CD4-positive, alpha-beta memory T cell (primary cell): ENCODE measurements at regions of chrX and their contacts with region 1.

Region 1: GRCh38 chrX:70133303-70134115 is at the start of gene IGBP1:
- DNase-seq: peak; percentile 78 to 94 (median 86)
- H3K4me3 ChIP-seq: peak within 1 kb of the TSS; percentile 89 to 90
- H3K4me3 Mint-ChIP-seq: peak within 1 kb of the TSS; percentile 87 to 99 (median 98)
- H3K27ac ChIP-seq: peak within 1 kb of the TSS; percentile 77
- H3K27ac Mint-ChIP-seq: peak within 1 kb of the TSS; percentile 84 to 99 (median 98)
- H3K4me1 ChIP-seq: peaks cover 35% of the 10 kb centered on the region
- H3K4me1 Mint-ChIP-seq: peaks cover 16 to 38% (median 22%) of the 10 kb centered on the region in 4 donors
- H3K27me3 ChIP-seq: no peaks in the 10 kb centered on the region
- H3K27me3 Mint-ChIP-seq: no peaks in the 10 kb centered on the region
- total RNA-seq, gene IGBP1: 60.8 to 66.2 TPM

Region 2: GRCh38 chrX:68504237-68504636 is 1629.3 kb before region 1 on chrX:
- CTCF ChIA-PET with region 1: no interaction called
- POLR2A ChIA-PET with region 1: no interaction called
- intact Hi-C with region 1: loop called (anchors 10 kb)
- DNase-seq: peak in 3 of 5 donors; percentile 14 to 81 (median 33)
- H3K4me3 ChIP-seq: no peak overlapping the region
- H3K4me3 Mint-ChIP-seq: peak overlapping the region in 1 of 8 donors; percentile 48
- H3K27ac ChIP-seq: peak overlapping the region; percentile 30
- H3K27ac Mint-ChIP-seq: peak overlapping the region; percentile 32 to 88 (median 75)
- H3K4me1 ChIP-seq: peaks cover 56% of the 10 kb centered on the region
- H3K4me1 Mint-ChIP-seq: peaks cover 20 to 85% (median 55%) of the 10 kb centered on the region in 4 donors
- H3K27me3 ChIP-seq: no peaks in the 10 kb centered on the region
- H3K27me3 Mint-ChIP-seq: no peaks in the 10 kb centered on the region

Region 3: DNA sequence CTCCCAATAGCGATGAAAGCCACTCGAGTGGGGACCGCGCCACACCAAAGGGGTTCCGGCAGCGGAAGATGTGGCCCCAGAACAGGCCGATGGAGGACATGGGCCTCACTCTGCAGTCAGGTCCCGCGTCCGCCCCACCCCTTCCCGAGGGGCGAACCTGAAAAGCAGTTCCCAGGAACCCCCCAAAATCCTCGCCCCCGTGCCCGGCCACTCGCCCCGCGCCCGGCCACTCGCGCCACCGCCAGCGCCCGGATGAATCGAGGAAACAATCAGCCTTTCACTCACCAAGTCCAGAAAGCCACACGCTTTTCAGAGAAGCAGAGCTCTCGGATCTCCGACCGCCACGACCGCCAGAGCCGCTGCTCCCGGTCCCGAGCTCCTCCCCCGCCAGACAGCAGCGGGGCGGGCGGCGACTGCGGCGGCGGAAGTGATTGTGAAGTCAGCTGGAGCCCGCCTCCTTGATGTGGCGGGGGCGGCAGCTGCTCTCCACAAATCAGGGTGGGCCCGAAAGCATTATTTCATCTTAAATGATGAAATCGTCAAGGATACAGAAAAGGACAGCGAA is 968.3 kb before region 1 on chrX and contains the start of gene PJA1:
- CTCF ChIA-PET with region 1: no interaction called
- POLR2A ChIA-PET with region 1: interaction called, 3 read pairs
- intact Hi-C with region 1: loop called (anchors 10 kb)
- DNase-seq: peak; percentile 66 to 75 (median 70)
- H3K4me3 ChIP-seq: peak within 1 kb of the TSS; percentile 60 to 76
- H3K4me3 Mint-ChIP-seq: peak within 1 kb of the TSS; percentile 74 to 91 (median 88)
- H3K27ac ChIP-seq: peak within 1 kb of the TSS; percentile 64
- H3K27ac Mint-ChIP-seq: peak within 1 kb of the TSS; percentile 56 to 94 (median 92)
- H3K4me1 ChIP-seq: peaks cover 28% of the 10 kb centered on the region
- H3K4me1 Mint-ChIP-seq: peaks cover 21 to 40% (median 28%) of the 10 kb centered on the region in 4 donors
- H3K27me3 ChIP-seq: no peaks in the 10 kb centered on the region
- H3K27me3 Mint-ChIP-seq: no peaks in the 10 kb centered on the region
- total RNA-seq, gene PJA1: 23.9 to 27.1 TPM

Region 4: GRCh38 chrX:69538321-69538876 is 595.1 kb before region 1 on chrX:
- CTCF ChIA-PET with region 1: no interaction called
- POLR2A ChIA-PET with region 1: no interaction called
- intact Hi-C with region 1: loop called (anchors 1 kb)
- DNase-seq: peak; percentile 51 to 62 (median 56)
- H3K4me3 ChIP-seq: no peak overlapping the region
- H3K4me3 Mint-ChIP-seq: peak overlapping the region in 6 of 8 donors; percentile 6 to 74 (median 58)
- H3K27ac ChIP-seq: no peak overlapping the region
- H3K27ac Mint-ChIP-seq: peak overlapping the region in 1 of 7 donors; percentile 59
- H3K4me1 ChIP-seq: peaks cover 14% of the 10 kb centered on the region
- H3K4me1 Mint-ChIP-seq: peaks cover 7 to 13% (median 10%) of the 10 kb centered on the region in 4 donors
- H3K27me3 ChIP-seq: no peaks in the 10 kb centered on the region
- H3K27me3 Mint-ChIP-seq: peaks cover 0 to 3% of the 10 kb centered on the region in 2 donors

Region 5: DNA sequence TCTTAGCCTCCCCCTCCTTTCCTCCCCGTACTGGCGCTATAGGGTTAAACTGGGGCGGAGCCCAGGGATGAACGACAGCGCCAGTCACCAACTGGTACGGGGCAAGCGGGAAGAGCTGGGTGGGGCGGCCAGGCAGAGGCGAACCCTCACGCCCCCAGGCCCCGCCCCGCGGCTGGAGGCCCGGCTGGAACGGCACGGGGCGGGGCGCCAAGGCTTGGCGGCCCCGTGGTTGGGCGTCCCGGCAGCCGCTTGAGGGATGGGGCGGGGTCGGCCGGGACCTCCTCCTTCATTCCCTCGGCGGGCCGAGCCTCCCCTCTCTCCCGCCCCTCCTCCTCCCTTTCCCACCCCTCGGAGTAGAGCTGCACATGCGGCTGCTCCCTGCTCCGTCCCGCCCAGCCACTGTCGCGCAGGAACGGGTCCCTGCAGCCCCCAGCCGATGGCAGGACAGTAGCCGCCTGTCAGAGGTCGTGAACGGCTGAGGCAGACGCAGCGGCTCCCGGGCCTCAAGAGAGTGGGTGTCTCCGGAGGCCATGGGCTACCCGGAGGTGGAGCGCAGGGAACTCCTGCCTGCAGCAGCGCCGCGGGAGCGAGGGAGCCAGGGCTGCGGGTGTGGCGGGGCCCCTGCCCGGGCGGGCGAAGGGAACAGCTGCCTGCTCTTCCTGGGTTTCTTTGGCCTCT is 517.6 kb before region 1 on chrX and contains the start of gene EDA:
- CTCF ChIA-PET with region 1: no interaction called
- POLR2A ChIA-PET with region 1: no interaction called
- intact Hi-C with region 1: loop called (anchors 1 kb)
- DNase-seq: peak; percentile 63 to 74 (median 67)
- H3K4me3 ChIP-seq: peak within 1 kb of the TSS in 1 of 2 donors; percentile 35
- H3K4me3 Mint-ChIP-seq: peak within 1 kb of the TSS; percentile 84 to 91 (median 86)
- H3K27ac ChIP-seq: peak within 1 kb of the TSS; percentile 4
- H3K27ac Mint-ChIP-seq: peak within 1 kb of the TSS in 1 of 7 donors; percentile 66
- H3K4me1 ChIP-seq: peaks cover 4% of the 10 kb centered on the region
- H3K4me1 Mint-ChIP-seq: peaks cover 7 to 16% (median 12%) of the 10 kb centered on the region in 4 donors
- H3K27me3 ChIP-seq: no peaks in the 10 kb centered on the region
- H3K27me3 Mint-ChIP-seq: peaks cover 0 to 5% of the 10 kb centered on the region in 2 donors
- total RNA-seq, gene EDA: 2.8 to 4.0 TPM

Region 6: DNA sequence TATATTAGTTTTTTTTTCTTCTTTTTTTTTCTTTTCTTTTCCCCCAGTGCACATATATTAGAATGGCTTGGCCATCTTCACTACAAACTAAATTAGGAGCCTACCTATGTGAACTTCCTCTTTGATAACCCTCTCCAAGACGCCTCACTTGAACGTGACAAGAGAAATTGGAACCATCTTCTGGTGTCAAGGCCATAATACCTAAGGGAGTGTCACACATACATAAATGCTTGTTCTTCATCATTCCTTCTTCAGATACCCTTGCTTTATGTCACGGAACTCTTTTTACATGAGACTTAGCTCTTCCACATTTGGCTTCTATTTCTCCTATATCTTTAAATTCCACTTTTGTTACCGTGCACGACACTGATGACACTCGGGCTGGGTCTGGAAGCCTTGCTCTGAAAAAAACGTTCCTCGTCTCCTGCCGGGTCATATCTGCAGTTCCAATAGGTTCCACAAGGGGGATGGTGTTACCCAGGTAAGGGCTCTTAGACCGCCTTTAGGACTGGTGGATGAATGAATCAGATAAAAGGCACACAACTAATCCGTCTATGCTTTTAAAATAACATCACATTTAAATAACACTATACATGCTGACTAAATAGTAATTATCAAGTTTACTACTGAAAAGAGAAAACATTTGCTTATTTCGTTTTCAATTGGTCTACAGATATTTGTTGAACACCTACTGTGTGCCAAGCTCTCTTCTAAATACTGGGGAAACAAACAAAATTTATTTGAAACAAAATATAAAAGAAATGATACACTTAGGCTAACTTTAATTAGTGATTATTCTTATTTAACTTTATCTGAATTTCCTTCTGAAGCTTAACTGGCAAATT is 63.7 kb after region 1 on chrX:
- CTCF ChIA-PET with region 1: interaction called, 3 read pairs
- POLR2A ChIA-PET with region 1: no interaction called
- intact Hi-C with region 1: loop called (anchors 1 kb)
- DNase-seq: peak; percentile 59 to 69 (median 64)
- H3K4me3 ChIP-seq: no peak overlapping the region
- H3K4me3 Mint-ChIP-seq: peak overlapping the region in 3 of 8 donors; percentile 2 to 43 (median 23)
- H3K27ac ChIP-seq: no peak overlapping the region
- H3K27ac Mint-ChIP-seq: peak overlapping the region in 1 of 7 donors; percentile 45
- H3K4me1 ChIP-seq: no peaks in the 10 kb centered on the region
- H3K4me1 Mint-ChIP-seq: peaks cover 1 to 6% (median 3%) of the 10 kb centered on the region in 4 donors
- H3K27me3 ChIP-seq: no peaks in the 10 kb centered on the region
- H3K27me3 Mint-ChIP-seq: peaks cover 1 to 5% of the 10 kb centered on the region in 2 donors

Region 7: DNA sequence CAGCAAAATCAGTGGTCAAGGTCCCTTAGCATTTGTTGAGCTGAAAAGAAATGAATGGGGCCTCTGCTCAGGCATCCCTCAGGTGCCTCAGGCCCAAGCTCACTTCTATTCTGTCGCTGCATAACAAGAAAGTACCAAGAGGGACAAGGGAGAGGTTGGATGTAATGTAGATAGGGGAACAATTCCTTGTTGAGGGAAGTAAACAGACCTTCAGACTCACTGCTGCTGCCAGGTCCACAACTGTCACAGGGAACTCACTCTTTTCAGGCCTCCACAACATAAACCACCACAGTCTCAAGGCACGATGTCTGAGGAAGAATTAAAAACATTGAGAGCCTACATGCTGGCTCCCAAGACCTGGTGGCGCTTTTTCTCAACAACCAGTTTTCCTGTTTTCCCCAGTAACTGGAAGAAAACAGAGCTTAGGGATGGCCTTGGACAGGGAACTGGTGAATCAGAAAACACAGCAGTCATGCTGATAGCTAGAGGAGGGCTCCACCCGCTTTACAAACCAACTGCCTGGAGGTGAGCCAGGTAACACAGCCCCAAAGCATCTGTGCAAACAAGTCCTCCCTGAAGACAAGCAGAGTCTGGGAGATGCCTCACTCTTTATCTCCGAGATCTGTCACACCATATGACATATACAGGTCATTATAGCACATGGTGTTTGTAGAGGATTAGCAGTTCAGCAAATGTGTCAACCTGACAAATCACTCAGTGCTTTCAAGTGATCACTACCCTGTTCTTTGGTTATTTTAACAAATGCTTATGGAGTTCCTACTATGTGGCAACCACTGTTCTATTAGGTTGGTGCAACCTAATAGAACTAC is 86.6 kb after region 1 on chrX:
- CTCF ChIA-PET with region 1: no interaction called
- POLR2A ChIA-PET with region 1: no interaction called
- intact Hi-C with region 1: no loop called
- DNase-seq: no peak
- H3K4me3 ChIP-seq: no peak overlapping the region
- H3K4me3 Mint-ChIP-seq: no peak overlapping the region
- H3K27ac ChIP-seq: no peak overlapping the region
- H3K27ac Mint-ChIP-seq: no peak overlapping the region
- H3K4me1 ChIP-seq: no peaks in the 10 kb centered on the region
- H3K4me1 Mint-ChIP-seq: no peaks in the 10 kb centered on the region
- H3K27me3 ChIP-seq: no peaks in the 10 kb centered on the region
- H3K27me3 Mint-ChIP-seq: no peaks in the 10 kb centered on the region

Region 8: DNA sequence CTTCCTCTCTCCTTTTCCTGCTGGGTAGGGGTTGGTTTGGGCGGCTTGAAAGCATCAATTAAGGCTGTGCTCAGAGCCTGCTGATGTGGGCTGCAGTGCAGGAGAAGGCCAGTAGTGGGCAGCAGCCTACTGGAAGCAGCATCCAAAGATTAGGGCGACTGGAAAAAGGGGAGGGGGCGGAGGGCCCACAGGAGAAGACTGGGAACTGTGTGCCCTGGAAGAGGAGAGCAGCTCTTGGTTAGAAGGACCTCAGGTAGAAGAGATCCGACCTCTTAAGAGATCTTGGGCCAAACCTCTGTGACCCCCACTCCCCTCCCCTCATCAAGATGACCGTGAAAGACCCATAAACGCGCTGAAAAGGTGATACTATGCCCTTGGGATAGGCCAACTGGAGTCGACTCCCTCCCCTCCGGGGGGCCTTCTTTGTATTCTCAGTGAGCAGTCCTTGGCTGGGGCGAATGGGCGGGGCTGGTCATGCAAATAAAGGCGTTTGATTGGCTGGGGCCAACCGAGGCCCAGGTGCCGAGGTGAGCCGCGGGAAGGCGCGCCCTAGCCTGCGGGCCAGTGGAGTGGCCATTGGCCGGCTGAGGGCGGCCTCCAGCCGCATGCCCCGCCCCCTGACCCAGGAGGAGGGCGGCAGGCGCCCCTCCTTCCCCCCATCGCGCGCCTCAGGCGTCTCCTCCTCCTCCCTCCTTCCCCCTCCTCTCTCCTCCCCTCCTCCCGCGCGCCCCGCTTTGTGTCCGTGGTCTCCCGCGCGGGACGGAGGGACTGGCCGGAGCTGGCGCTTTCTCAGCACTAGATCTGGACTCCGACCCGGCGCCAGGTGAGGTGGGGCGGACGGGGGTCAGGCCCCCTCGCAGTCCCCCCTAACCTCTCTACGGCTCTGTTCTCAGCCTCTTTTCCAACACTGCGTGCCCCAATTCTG is 321.2 kb after region 1 on chrX:
- CTCF ChIA-PET with region 1: interaction called, 4 read pairs
- POLR2A ChIA-PET with region 1: interaction called, 6 read pairs
- intact Hi-C with region 1: loop called (anchors 5 kb)
- DNase-seq: peak; percentile 68 to 92 (median 73)
- H3K4me3 ChIP-seq: peak overlapping the region; percentile 57 to 60
- H3K4me3 Mint-ChIP-seq: peak overlapping the region; percentile 77 to 90 (median 88)
- H3K27ac ChIP-seq: peak overlapping the region; percentile 60
- H3K27ac Mint-ChIP-seq: peak overlapping the region; percentile 78 to 94 (median 92)
- H3K4me1 ChIP-seq: peaks cover 33% of the 10 kb centered on the region
- H3K4me1 Mint-ChIP-seq: peaks cover 23 to 48% (median 32%) of the 10 kb centered on the region in 4 donors
- H3K27me3 ChIP-seq: no peaks in the 10 kb centered on the region
- H3K27me3 Mint-ChIP-seq: no peaks in the 10 kb centered on the region